OCI-LY7 (cell line): ENCODE measurements at regions of chr7 and their contacts with region 1.

Region 1: DNA sequence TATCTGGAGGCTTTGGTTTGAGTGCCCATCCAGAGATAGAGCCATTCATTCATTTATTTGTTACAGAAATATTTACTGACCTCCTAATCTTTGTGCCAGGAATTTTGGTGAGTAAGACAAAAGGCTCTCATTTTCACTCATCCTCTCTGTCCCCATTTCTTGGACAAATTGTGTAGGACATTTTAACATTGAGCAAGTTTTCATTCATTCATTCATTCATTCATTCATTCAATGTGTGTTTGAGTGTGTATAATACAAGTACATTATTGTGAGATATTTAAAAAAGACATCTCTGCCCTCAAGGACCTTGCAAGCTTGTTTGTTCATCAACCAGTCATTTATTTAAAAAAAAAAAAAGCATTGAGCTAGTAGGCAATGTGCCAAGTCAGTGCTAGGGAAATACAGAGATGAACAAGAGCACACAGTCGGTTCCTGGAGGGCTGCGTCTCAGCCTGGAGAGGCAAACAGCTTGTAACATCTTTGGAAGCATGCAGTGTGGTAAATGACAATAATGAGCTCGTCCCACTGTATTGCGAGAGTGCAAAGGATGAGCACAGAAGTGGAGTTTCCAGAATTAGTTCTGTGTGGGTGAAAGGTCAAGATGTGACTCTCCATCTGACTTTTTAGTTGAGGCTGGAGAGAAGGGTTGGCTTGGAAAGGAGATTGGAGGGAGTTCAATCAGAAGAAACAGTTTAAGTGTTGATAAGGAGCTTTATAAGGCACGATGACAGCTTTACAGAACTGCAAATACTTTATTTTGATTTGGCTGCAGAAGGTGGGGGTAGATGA is 50.5 kb upstream of the HBP1 start:
- DNase-seq: no peak
- H3K4me3 ChIP-seq: no peak overlapping the region
- H3K27ac ChIP-seq: no peak overlapping the region
- H3K4me1 ChIP-seq: peaks cover 55% of the 10 kb centered on the region
- CTCF ChIP-seq: no peak

Region 2: GRCh38 chr7:106999023-106999422 is 119.3 kb before region 1 on chr7:
- CTCF ChIA-PET with region 1: no interaction called
- POLR2A ChIA-PET with region 1: no interaction called
- intact Hi-C with region 1: no loop called
- DNase-seq: no peak
- H3K4me3 ChIP-seq: no peak overlapping the region
- H3K27ac ChIP-seq: no peak overlapping the region
- H3K4me1 ChIP-seq: no peaks in the 10 kb centered on the region
- CTCF ChIP-seq: no peak

Region 3: GRCh38 chr7:107103363-107103762 is 14.9 kb before region 1 on chr7:
- CTCF ChIA-PET with region 1: interaction called, 7 read pairs
- POLR2A ChIA-PET with region 1: interaction called, 68 read pairs
- intact Hi-C with region 1: no loop called
- DNase-seq: peak; percentile 74
- H3K4me3 ChIP-seq: peak overlapping the region; percentile 13
- H3K27ac ChIP-seq: peak overlapping the region; percentile 50
- H3K4me1 ChIP-seq: peaks cover 61% of the 10 kb centered on the region
- CTCF ChIP-seq: no peak

Region 4: DNA sequence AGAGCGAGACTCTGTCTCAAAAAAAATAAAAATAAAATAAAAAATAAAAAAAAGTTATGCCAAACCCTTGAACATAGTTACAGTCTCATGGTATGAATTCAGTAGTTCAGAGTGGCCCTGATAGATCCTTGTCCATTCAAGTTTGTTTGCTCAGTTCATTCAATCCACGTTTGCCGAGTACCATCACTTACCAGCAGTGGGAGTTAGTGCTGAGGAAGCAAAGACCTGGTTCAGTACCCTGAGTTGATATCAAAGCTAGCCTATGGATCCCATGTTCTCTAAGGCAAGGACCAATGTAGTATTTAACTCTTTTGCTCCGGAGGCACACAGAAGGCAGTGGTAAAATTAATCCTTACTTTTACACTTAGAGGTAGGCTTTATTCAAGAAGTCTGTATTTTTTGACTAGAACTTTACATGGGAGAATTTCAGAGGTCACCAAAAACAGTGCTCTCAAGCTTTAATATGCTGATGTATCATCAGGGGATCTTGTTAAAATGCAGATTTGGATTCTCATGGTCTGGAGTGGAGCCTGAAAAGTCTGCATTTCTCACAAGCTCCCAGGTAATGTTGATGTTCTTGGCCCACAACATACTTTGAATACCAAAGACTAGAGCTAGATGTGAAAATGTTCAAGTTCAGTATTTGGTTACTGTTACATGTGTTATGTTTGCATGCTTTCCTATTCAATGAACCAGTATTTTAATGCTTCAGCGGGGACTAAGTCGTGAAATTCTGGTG is 12.3 kb after region 1 on chr7:
- CTCF ChIA-PET with region 1: interaction called, 7 read pairs
- POLR2A ChIA-PET with region 1: interaction called, 19 read pairs
- intact Hi-C with region 1: no loop called
- DNase-seq: no peak
- H3K4me3 ChIP-seq: no peak overlapping the region
- H3K27ac ChIP-seq: no peak overlapping the region
- H3K4me1 ChIP-seq: peaks cover 30% of the 10 kb centered on the region
- CTCF ChIP-seq: 0 out of 2 replicates have a peak, but pooled peaks have one; percentile 23